AG04449 (cell line): ENCODE measurements at regions of chr1 and their contacts with region 1.

Region 1: DNA sequence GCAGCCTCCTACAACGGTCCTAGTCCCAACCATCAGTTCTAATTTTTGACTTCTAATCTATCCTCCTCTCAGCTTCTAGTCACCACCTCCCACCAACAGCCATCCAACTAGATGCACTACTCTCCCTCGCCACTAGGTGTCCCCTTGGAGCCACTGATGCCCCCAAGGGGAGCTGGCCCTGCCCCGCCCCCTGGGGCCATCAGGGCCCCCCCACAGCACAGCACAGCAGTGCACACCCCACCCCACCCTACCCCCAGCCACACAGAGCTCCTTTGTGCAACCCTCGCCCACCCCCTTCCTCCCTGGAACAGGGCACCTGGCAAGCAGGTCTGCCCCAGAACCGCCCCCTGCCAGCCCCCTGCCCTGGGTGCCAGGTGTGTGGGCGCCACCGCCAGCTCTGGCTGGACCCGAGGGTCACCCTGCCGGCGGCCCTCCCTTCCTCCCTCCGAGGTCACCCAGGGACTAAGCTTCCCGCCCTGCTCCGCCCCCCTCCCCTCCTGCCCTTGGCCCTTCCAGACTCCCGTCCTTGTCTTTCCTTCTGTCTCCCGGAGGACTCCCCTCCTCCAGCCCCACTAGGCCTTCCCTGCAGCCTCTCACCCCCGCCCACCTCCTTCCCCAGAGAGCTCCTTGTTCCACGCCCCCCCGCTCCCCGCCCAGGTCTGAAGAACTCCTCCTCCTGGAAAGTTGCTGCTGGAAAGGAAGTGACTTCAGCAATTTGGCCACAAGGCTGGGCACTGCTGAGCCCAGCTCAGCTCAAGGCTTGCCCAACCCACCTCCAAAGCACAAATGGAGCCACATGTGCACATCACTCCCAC is 47.0 kb downstream of the AHDC1 start:
- DNase-seq: peak; percentile 76
- H3K4me3 ChIP-seq: peak overlapping the region; percentile 29; the same call in 1 of the 2 replicates
- CTCF ChIP-seq: peak; percentile 88

Region 2: GRCh38 chr1:27332536-27333281 is 224.3 kb before region 1 on chr1:
- CTCF ChIA-PET with region 1: no interaction called
- POLR2A ChIA-PET with region 1: no interaction called
- DNase-seq: no peak
- H3K4me3 ChIP-seq: no peak overlapping the region
- CTCF ChIP-seq: peak; percentile 85

Region 3: DNA sequence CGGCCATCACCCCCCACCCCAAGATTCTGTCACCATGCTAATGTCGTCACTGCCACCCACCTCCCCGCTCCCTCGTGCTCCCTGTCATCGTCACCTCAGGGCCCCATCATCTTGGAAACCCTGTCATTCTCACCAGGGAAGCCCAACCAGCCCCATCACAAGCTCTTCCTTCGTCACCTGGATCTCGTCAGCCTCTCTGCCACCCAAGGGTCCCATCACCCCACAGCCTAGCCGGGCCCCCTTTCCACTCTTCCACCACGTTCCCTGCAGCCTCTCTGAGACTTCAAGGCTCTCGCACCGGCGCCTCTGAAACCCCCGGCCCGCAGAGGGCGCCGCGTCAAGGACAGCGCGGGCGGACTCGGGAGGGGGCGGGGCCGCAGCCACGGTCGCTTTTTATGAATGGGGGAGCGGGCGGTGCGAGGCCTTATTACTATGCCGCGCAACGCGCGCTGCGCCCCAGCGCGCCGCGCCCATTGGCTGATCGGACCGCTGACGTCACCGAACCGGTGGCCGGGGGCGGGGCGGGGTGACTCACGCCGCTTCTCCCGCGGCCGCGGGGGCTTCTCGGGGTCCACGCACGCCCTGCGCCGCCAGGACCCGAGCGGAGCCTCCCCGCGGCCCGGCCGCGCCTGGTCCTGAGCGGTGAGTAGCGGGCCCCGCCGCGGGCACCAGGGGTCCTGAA is 164.8 kb before region 1 on chr1 and contains the start of gene GPR3:
- CTCF ChIA-PET with region 1: interaction called, 25 read pairs
- POLR2A ChIA-PET with region 1: no interaction called
- DNase-seq: no peak
- H3K4me3 ChIP-seq: peak within 1 kb of the TSS; percentile 71
- CTCF ChIP-seq: peak; percentile 83

Region 4: GRCh38 chr1:27428316-27429028 is 128.5 kb before region 1 on chr1:
- CTCF ChIA-PET with region 1: interaction called, 10 read pairs
- POLR2A ChIA-PET with region 1: no interaction called
- DNase-seq: no peak
- H3K4me3 ChIP-seq: no peak overlapping the region
- CTCF ChIP-seq: no peak

Region 5: GRCh38 chr1:27448982-27449381 is 108.0 kb before region 1 on chr1:
- CTCF ChIA-PET with region 1: no interaction called
- POLR2A ChIA-PET with region 1: no interaction called
- DNase-seq: no peak
- H3K4me3 ChIP-seq: no peak overlapping the region
- CTCF ChIP-seq: no peak

Region 6: GRCh38 chr1:27525296-27526272 is 31.4 kb before region 1 on chr1:
- CTCF ChIA-PET with region 1: interaction called, 11 read pairs
- POLR2A ChIA-PET with region 1: no interaction called
- DNase-seq: no peak
- H3K4me3 ChIP-seq: peak overlapping the region; percentile 13; the same call in 1 of the 2 replicates
- CTCF ChIP-seq: no peak

Region 7: GRCh38 chr1:27568300-27569087 is 11.5 kb after region 1 on chr1:
- CTCF ChIA-PET with region 1: interaction called, 219 read pairs
- POLR2A ChIA-PET with region 1: interaction called, 8 read pairs
- DNase-seq: peak; percentile 10
- H3K4me3 ChIP-seq: peak overlapping the region; percentile 27; the same call in 1 of the 2 replicates
- CTCF ChIP-seq: peak; percentile 43

Region 8: GRCh38 chr1:27581823-27582243 is 24.8 kb after region 1 on chr1:
- CTCF ChIA-PET with region 1: interaction called, 40 read pairs
- POLR2A ChIA-PET with region 1: no interaction called
- DNase-seq: no peak
- H3K4me3 ChIP-seq: no peak overlapping the region
- CTCF ChIP-seq: no peak

Region 9: DNA sequence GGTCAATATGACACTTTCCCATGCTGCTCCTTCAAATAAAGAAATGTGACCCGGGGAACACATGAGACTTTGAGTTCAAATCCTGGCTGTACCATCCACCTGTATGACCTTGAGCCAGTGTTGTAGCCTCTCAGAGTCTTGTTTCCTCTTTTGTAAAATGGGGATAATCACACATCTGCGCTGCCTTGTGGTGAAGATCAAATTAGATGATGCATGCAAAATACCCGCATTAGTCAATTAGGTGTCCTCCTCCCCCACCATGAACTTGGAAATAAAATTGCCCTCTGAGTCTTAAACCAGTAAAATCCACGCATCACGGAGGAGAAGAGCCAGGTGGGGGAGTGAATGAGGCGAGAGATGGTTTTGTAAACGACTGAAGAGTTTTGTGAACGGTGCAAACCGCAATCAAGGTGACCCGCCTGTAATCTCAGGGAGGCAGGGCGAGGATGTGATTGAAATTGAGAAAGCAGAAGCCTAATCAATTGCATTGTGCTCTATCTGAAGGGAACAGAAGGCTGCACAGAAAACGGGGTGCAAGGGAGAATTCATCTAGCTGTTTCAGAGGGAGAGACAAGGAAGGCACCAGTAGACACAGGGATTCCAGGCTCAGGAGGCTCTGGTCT is 52.7 kb after region 1 on chr1:
- CTCF ChIA-PET with region 1: interaction called, 689 read pairs
- POLR2A ChIA-PET with region 1: interaction called, 14 read pairs
- DNase-seq: no peak
- H3K4me3 ChIP-seq: no peak overlapping the region
- CTCF ChIP-seq: no peak